HCT116 (cell line): ENCODE measurements at regions of chr18 and their contacts with region 1.

Region 1: GRCh38 chr18:36419905-36420531 is 122.5 kb downstream of the FHOD3 start:
- DNase-seq: peak; percentile 60
- ATAC-seq: peak; percentile 98
- H3K4me3 ChIP-seq: no peak overlapping the region
- H3K27ac ChIP-seq: no peak overlapping the region
- H3K4me1 ChIP-seq: peaks cover 8 to 15% of the 10 kb centered on the region in 2 experiments; a peak in 3 of 4 replicates
- H3K27me3 ChIP-seq: no peaks in the 10 kb centered on the region
- CTCF ChIP-seq: peak in 2 of 3 experiments; percentile 54 to 61; a peak in 4 of 6 replicates
- POLR2A ChIP-seq: no peak
- RAD21 ChIP-seq: peak; percentile 38

Region 2: GRCh38 chr18:36015629-36016028 is 404.4 kb before region 1 on chr18:
- CTCF ChIA-PET with region 1: no interaction called
- POLR2A ChIA-PET with region 1: no interaction called
- RAD21 ChIA-PET with region 1: no interaction called
- intact Hi-C with region 1: loop called (anchors 10 kb)
- DNase-seq: no peak
- ATAC-seq: no peak
- H3K4me3 ChIP-seq: no peak overlapping the region
- H3K27ac ChIP-seq: no peak overlapping the region
- H3K4me1 ChIP-seq: no peaks in the 10 kb centered on the region
- H3K27me3 ChIP-seq: no peaks in the 10 kb centered on the region
- CTCF ChIP-seq: no peak
- POLR2A ChIP-seq: no peak
- RAD21 ChIP-seq: no peak

Region 3: GRCh38 chr18:36212301-36213171 is 207.5 kb before region 1 on chr18:
- CTCF ChIA-PET with region 1: no interaction called
- POLR2A ChIA-PET with region 1: no interaction called
- RAD21 ChIA-PET with region 1: no interaction called
- intact Hi-C with region 1: no loop called
- DNase-seq: no peak
- ATAC-seq: no peak
- H3K4me3 ChIP-seq: no peak overlapping the region
- H3K27ac ChIP-seq: no peak overlapping the region
- H3K4me1 ChIP-seq: no peaks in the 10 kb centered on the region
- H3K27me3 ChIP-seq: no peaks in the 10 kb centered on the region
- CTCF ChIP-seq: no peak
- POLR2A ChIP-seq: no peak
- RAD21 ChIP-seq: no peak